ENCODE measurements at regions of chr1 and their contacts with region 1.

Region 1: DNA sequence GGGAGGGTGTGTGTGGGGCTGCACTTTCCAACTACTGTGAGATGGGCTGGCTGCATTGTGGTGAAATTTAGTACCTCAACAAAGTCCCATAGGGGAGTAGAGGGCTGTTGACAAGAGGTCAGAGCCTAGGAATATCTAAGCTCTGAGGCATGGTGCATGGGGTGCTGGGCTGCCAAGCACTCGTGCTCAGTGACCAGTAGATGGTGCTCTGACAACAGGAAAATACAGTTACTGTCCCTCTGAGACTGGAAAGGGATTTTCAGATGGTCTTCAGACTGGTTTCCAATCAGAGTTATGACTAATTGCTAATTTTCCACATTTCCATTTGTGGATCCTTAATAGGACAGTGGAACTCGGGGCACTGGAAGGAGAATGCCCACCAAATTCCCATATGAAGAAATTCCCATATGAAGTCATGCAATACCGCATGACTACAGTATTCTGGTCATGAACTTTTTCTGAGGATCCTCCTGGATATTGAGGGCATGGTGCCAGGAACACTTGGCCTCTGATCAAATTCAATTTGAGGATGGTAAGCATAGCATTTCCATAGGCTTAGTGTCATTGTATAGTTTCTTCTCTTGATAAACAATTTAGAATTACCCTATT is 4.1 kb upstream of the CACNA1E start:
- DNase-seq: peak; percentile 42
- ATAC-seq: peak; percentile 52
- H3K4me3 Mint-ChIP-seq: no peak overlapping the region
- H3K27ac Mint-ChIP-seq: no peak overlapping the region
- H3K4me1 Mint-ChIP-seq: peaks cover 3% of the 10 kb centered on the region
- H3K27me3 Mint-ChIP-seq: peaks cover 31% of the 10 kb centered on the region

Region 2: GRCh38 chr1:181676269-181676668 is 197.0 kb after region 1 on chr1:
- CTCF ChIA-PET with region 1: interaction called, 9 read pairs
- POLR2A ChIA-PET with region 1: no interaction called
- intact Hi-C with region 1: loop called (anchors 1 to 10 kb)
- DNase-seq: peak; percentile 30
- ATAC-seq: no peak
- H3K4me3 Mint-ChIP-seq: no peak overlapping the region
- H3K27ac Mint-ChIP-seq: no peak overlapping the region
- H3K4me1 Mint-ChIP-seq: no peaks in the 10 kb centered on the region
- H3K27me3 Mint-ChIP-seq: peaks cover 32% of the 10 kb centered on the region

Region 3: GRCh38 chr1:181936768-181937581 is 457.7 kb after region 1 on chr1:
- CTCF ChIA-PET with region 1: interaction called, 6 read pairs
- POLR2A ChIA-PET with region 1: interaction called, 8 read pairs
- intact Hi-C with region 1: loop called (anchors 1 kb)
- DNase-seq: peak; percentile 70
- ATAC-seq: peak; percentile 76
- H3K4me3 Mint-ChIP-seq: no peak overlapping the region
- H3K27ac Mint-ChIP-seq: no peak overlapping the region
- H3K4me1 Mint-ChIP-seq: peaks cover 4% of the 10 kb centered on the region
- H3K27me3 Mint-ChIP-seq: peaks cover 2% of the 10 kb centered on the region

Region 4: GRCh38 chr1:182054698-182055326 is 575.6 kb after region 1 on chr1:
- CTCF ChIA-PET with region 1: interaction called, 5 read pairs
- POLR2A ChIA-PET with region 1: no interaction called
- intact Hi-C with region 1: loop called (anchors 1 to 2 kb)
- DNase-seq: peak; percentile 75
- ATAC-seq: peak; percentile 44
- H3K4me3 Mint-ChIP-seq: no peak overlapping the region
- H3K27ac Mint-ChIP-seq: no peak overlapping the region
- H3K4me1 Mint-ChIP-seq: peaks cover 7% of the 10 kb centered on the region
- H3K27me3 Mint-ChIP-seq: peaks cover 28% of the 10 kb centered on the region

Region 5: DNA sequence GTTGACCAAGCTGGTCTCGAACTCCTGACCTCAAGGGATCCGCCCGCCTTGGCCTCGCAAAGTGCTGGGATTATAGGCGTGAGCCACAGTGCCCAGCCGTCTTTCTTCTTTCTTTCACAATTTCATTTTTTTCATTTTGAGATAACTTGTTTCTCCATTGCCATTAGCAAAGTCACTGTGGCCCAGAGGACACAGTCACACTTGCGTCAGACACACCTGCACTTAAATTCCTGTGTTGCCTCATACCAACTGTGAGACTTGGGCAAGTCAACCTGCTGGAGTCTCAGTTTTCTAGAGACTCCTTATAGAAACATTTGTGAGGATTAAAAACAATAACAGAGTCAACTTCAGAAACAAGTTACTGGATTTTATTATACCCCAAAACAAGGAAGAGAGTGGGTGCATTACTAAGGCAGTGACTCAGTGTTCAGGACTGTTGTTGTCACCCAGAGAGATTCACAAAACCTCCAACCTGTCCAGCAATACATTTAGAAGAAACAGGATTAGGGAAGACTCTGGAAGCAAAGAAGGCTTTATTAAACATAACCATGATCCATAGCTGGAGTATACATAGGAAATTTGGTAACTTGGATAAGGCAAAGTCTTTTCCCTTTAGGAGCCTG is 918.6 kb after region 1 on chr1:
- CTCF ChIA-PET with region 1: no interaction called
- POLR2A ChIA-PET with region 1: no interaction called
- intact Hi-C with region 1: loop called in 1 of 2 experiments (anchors 5 kb)
- DNase-seq: no peak
- ATAC-seq: no peak
- H3K4me3 Mint-ChIP-seq: no peak overlapping the region
- H3K27ac Mint-ChIP-seq: no peak overlapping the region
- H3K4me1 Mint-ChIP-seq: peaks cover 2% of the 10 kb centered on the region
- H3K27me3 Mint-ChIP-seq: peaks cover 6% of the 10 kb centered on the region